Activated T-helper 1 cell treated with anti-CD3 and anti-CD28 coated beads, Interleukin-12 subunit alpha, Interleukin-12 subunit beta, Interleukin-2, Interleukin-4 antibody, amounts not matched to agents 30 ng/mL and 10 ng/mL and 1 ng/mL, durations not matched to agents 14 hours and 24 hours and 36 hours (primary cell): ENCODE measurements at regions of chr3 and their contacts with region 1.

Region 1: GRCh38 chr3:114152519-114153151 is 26.2 kb downstream of the DRD3 start:
- DNase-seq: peak; percentile 52
- H3K4me3 Mint-ChIP-seq: peak overlapping the region; percentile 21
- H3K27ac Mint-ChIP-seq: no peak overlapping the region
- H3K4me1 Mint-ChIP-seq: no peaks in the 10 kb centered on the region
- H3K27me3 Mint-ChIP-seq: peaks cover 8% of the 10 kb centered on the region

Region 2: GRCh38 chr3:113132571-113132996 is 1020.1 kb before region 1 on chr3:
- intact Hi-C with region 1: no loop called
- DNase-seq: no peak
- H3K4me3 Mint-ChIP-seq: no peak overlapping the region
- H3K27ac Mint-ChIP-seq: no peak overlapping the region
- H3K4me1 Mint-ChIP-seq: no peaks in the 10 kb centered on the region
- H3K27me3 Mint-ChIP-seq: no peaks in the 10 kb centered on the region

Region 3: GRCh38 chr3:113838631-113839209 is 313.9 kb before region 1 on chr3 and contains the start of gene GRAMD1C:
- intact Hi-C with region 1: loop called (anchors 2 kb)
- DNase-seq: peak; percentile 79
- H3K4me3 Mint-ChIP-seq: peak within 1 kb of the TSS; percentile 79
- H3K27ac Mint-ChIP-seq: no peak within 1 kb of the TSS
- H3K4me1 Mint-ChIP-seq: peaks cover 8% of the 10 kb centered on the region
- H3K27me3 Mint-ChIP-seq: peaks cover 12% of the 10 kb centered on the region
- total RNA-seq, gene GRAMD1C: 0.05 TPM in 1 of 2 replicates, not detected in the other

Region 4: DNA sequence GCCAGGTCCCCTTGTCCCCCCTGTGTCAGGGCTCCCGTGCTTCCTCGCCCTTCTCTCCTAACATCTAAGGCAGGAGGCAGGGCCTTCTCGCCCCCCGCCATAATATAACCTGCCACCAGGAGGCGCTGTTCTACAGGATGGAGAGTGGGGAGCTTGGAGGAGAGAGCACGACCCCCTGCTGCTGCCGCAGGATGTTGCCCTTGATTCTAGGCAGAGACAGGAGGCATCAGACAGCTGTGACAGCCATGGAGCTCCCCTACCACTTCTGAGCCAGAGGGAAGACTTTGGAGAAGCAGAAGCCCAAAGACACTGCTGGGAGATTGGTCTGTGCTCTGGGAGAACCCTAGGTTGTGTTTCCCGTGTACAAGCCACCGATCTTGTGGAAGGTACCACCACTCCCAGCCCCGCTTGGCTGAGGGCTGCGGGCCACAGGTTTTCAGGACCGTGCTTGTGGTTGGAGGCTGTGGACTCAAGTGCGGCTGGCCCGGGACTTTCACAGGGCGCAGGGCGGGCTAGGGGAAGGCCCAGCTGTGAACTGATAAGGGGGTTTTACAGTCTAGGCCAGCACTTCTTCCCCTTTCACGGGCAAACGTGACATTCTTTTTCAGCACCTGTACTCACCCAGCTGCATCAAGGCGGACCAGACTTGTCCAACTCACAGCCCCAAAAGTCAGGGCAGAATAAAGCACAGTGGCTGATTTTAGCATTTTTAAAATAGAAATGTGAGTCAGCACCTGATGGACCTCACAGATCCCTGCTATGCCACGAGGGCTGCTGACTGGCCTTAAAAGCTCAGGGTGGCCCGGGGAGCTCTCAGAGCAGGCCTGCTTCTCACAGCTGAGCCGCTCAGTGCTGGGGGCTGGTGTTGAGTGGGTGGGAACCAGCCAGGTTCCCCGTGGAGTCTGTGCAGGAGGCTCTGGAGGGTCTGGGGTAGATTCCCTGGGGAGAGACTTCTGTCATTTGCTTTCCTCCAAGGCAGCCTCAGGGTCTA is 138.6 kb after region 1 on chr3:
- intact Hi-C with region 1: loop called (anchors 2 kb)
- DNase-seq: peak; percentile 57
- H3K4me3 Mint-ChIP-seq: no peak overlapping the region
- H3K27ac Mint-ChIP-seq: peak overlapping the region; percentile 68
- H3K4me1 Mint-ChIP-seq: peaks cover 18% of the 10 kb centered on the region
- H3K27me3 Mint-ChIP-seq: no peaks in the 10 kb centered on the region

Region 5: DNA sequence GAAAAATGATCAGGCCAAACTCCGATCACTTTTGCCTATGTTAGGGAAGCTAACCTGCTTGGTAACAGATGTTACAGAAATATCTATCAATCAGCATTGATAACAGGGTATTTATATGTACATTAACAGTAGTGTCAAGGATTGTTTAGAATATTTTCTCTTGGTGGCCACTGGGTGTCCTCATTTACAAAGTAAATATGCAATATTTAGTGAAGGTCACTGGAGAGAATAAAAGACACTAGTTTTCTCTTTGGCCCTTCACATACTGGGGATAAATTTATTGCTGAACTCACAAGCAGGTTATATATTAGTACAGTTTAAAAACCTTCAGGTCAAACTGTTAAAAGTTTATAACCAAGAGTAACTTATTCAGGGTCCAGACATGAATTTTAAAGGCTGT is 210.2 kb after region 1 on chr3:
- intact Hi-C with region 1: loop called (anchors 1 kb)
- DNase-seq: no peak
- H3K4me3 Mint-ChIP-seq: no peak overlapping the region
- H3K27ac Mint-ChIP-seq: no peak overlapping the region
- H3K4me1 Mint-ChIP-seq: no peaks in the 10 kb centered on the region
- H3K27me3 Mint-ChIP-seq: peaks cover 3% of the 10 kb centered on the region

Region 6: GRCh38 chr3:115092220-115092791 is 939.7 kb after region 1 on chr3:
- intact Hi-C with region 1: loop called (anchors 10 kb)
- DNase-seq: peak; percentile 12
- H3K4me3 Mint-ChIP-seq: no peak overlapping the region
- H3K27ac Mint-ChIP-seq: no peak overlapping the region
- H3K4me1 Mint-ChIP-seq: no peaks in the 10 kb centered on the region
- H3K27me3 Mint-ChIP-seq: no peaks in the 10 kb centered on the region